Mammary epithelial cell (primary cell): ENCODE measurements at regions of chr16 and their contacts with region 1.

Region 1: DNA sequence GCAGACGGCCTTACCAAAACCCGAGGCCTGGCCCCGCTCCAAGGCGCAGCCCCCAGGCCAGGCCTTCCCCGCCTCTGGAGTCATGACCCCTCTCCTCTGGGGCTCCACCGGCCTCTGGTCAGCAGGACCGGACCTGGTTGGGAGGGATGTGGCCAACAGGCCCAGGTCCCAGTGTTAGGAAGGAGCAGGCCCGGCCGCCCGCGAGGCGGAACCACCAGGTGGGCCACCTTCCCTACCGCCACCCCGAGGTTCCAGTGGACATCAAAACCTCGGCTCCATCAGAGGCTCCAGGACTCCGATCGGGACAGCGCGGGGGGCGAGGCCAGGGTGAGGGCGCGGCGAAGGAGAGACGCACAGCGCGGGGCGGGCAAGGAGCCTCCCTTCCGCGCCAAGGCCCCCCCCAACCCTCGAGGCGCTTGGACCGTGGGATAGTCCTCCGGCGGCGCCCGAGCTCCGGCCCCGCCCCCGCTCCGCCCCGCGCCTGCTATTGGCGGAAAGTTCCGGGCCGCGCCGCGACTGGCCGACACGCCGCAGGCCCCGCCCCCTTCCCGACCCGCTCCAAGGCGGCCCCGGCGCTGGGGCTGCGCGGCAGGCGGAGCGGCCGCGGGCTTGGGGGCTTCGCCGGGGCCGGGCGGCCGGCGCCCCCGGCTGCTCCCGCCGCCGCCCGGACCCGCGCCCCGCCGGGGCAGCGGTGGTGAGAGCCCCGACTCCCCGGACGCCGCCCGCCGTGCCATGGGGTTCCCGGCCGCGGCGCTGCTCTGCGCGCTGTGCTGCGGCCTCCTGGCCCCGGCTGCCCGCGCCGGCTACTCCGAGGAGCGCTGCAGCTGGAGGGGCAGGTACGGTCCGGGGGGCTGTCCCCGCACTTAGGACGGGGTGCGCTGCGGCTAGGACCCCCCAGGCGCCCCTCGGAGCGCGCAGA is at the start of gene METRN:
- DNase-seq: peak; percentile 75
- H3K4me3 ChIP-seq: peak within 1 kb of the TSS; percentile 37 to 64 (median 63)
- H3K27ac ChIP-seq: no peak within 1 kb of the TSS
- H3K4me1 ChIP-seq: peaks cover 28% of the 10 kb centered on the region
- H3K27me3 ChIP-seq: peaks cover 7% of the 10 kb centered on the region
- CTCF ChIP-seq: no peak
- total RNA-seq, gene METRN: 22.2 to 53.1 TPM

Region 2: GRCh38 chr16:660459-661183 is 54.2 kb before region 1 on chr16:
- CTCF ChIA-PET with region 1: no interaction called
- dilution Hi-C with region 1: loop called (anchors 5 kb)
- in situ Hi-C with region 1: no loop called
- intact Hi-C with region 1: no loop called
- DNase-seq: peak; percentile 51
- H3K4me3 ChIP-seq: no peak overlapping the region
- H3K27ac ChIP-seq: no peak overlapping the region
- H3K4me1 ChIP-seq: peaks cover 11% of the 10 kb centered on the region
- H3K27me3 ChIP-seq: no peaks in the 10 kb centered on the region
- CTCF ChIP-seq: peak; percentile 11 to 50

Region 3: DNA sequence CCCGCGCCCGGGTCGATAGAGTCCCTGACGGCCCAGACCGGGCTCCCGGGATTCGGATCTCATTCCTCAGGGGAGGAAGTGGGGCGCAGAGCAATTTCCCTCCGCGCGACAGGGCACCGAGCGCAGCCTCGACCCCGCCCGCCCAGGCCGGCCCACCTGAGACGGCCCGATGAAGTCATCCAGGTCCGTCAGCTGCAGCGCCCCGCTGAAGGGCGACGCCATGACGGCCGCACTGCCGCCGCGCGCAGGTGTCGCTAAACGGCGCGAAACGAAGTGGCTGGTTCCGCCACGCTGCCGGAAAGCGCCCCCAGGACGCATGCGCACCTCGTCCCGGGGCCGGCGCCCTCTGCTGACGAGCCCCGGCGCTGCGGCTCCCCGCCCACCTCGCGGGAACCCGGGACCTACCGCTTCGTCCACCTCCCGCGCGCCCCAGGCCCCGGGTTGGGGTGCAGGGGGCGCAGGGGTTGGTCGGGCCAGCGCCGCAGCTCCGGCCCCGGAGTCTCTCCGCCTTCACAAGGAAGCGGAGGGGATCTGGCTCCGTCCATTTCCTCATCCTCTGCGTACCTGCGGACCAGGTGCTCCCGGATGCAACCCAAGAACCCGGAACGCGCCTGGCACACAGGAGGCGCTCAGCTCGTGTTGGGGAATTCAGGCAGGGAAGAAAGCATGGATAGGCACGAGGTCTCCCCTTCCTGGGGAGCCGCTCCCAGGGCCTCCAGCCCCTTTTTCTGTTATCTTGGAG is 26.1 kb after region 1 on chr16 and contains the start of gene CIAO3:
- CTCF ChIA-PET with region 1: no interaction called
- dilution Hi-C with region 1: no loop called
- in situ Hi-C with region 1: no loop called
- intact Hi-C with region 1: loop called (anchors 2 kb)
- DNase-seq: peak; percentile 89
- H3K4me3 ChIP-seq: peak within 1 kb of the TSS; percentile 84 to 99 (median 95)
- H3K27ac ChIP-seq: peak within 1 kb of the TSS; percentile 62
- H3K4me1 ChIP-seq: peaks cover 8% of the 10 kb centered on the region
- H3K27me3 ChIP-seq: no peaks in the 10 kb centered on the region
- CTCF ChIP-seq: peak; percentile 61 to 81
- total RNA-seq, gene CIAO3: 28.7 to 28.8 TPM

Region 4: DNA sequence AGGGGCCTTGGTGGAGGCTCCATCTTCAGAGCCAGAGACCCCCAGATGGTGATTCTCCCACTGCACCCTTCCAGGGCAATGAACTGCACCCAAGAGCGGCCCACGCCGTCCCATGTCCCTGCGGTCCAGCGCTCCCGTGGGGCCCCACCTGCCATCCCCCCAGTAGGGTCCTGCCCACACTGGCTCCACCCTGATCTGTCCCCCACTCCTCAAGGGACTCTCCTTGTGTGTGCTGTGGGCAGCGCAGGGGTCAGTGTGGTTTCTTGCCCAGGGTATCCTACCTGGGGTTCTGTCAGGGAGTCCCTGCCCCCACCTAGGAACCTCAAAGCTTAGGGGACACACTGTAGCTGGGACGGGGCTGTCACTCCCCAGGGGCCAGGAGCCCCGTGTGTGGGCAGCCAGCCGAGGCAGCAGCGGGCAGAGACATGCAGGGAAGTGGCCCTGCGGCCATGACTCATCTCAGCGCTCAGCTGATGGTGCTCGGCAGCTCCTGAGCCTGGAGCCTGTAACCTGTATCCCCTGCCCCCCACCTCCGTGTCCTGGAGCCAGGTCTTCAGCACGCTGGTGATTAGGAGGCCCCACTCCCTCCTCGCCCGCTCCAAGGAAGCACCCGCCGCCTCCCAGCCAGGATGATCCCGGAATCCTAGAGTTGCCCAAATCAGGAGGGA is 322.0 kb after region 1 on chr16:
- CTCF ChIA-PET with region 1: no interaction called
- dilution Hi-C with region 1: loop called (anchors 5 kb)
- in situ Hi-C with region 1: no loop called
- intact Hi-C with region 1: no loop called
- DNase-seq: peak; percentile 75
- H3K4me3 ChIP-seq: peak overlapping the region in 1 of 3 experiments; percentile 9
- H3K27ac ChIP-seq: no peak overlapping the region
- H3K4me1 ChIP-seq: peaks cover 14% of the 10 kb centered on the region
- H3K27me3 ChIP-seq: no peaks in the 10 kb centered on the region
- CTCF ChIP-seq: no peak

Region 5: DNA sequence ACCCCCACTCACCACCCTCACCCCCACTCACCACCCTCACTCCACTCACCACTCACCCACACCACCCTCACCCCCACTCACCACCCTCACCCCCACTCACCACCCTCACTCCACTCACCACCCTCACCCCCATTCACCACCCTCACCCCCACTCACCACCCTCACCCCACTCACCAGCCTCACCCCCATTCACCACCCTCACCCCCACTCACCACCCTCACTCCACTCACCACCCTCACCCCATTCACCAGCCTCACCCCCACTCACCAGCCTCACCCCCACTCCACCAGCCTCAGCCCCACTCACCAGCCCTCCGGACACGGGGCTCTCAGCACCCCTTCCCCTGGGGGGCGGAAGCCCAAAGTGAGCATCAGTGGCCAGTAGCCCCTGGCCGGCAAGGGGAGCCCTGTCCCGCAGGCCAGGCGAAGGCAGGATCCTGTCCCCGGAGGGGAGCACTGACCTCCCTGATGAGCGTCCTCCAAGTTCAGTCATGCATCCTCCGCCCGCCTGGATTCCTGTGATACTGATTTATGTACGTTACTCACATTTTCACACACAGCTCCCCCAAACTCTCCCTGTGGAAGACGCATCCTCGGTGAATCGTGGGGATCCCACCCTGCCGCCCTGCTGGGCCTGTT is 399.2 kb after region 1 on chr16:
- CTCF ChIA-PET with region 1: no interaction called
- dilution Hi-C with region 1: loop called (anchors 5 kb)
- in situ Hi-C with region 1: no loop called
- intact Hi-C with region 1: no loop called
- DNase-seq: no peak
- H3K4me3 ChIP-seq: no peak overlapping the region
- H3K27ac ChIP-seq: no peak overlapping the region
- H3K4me1 ChIP-seq: peaks cover 3% of the 10 kb centered on the region
- H3K27me3 ChIP-seq: peaks cover 6% of the 10 kb centered on the region
- CTCF ChIP-seq: no peak